Endothelial cell of umbilical vein (primary cell): ENCODE measurements at regions of chr1 and their contacts with region 1.

Region 1: GRCh38 chr1:201042779-201043461 is 19.4 kb upstream of the KIF21B start:
- DNase-seq: peak; percentile 73
- H3K4me3 ChIP-seq: no peak overlapping the region
- H3K27ac ChIP-seq: no peak overlapping the region
- H3K4me1 ChIP-seq: no peaks in the 10 kb centered on the region
- H3K27me3 ChIP-seq: peaks cover 0 to 2% of the 10 kb centered on the region in 2 experiments
- CTCF ChIP-seq: peak; percentile 86 to 91
- POLR2A ChIP-seq: no peak

Region 2: GRCh38 chr1:200654660-200655059 is 388.3 kb before region 1 on chr1:
- CTCF ChIA-PET with region 1: no interaction called
- POLR2A ChIA-PET with region 1: no interaction called
- dilution Hi-C with region 1: no loop called
- intact Hi-C with region 1: no loop called
- DNase-seq: no peak
- H3K4me3 ChIP-seq: no peak overlapping the region
- H3K27ac ChIP-seq: no peak overlapping the region
- H3K4me1 ChIP-seq: no peaks in the 10 kb centered on the region
- H3K27me3 ChIP-seq: no peaks in the 10 kb centered on the region
- CTCF ChIP-seq: no peak
- POLR2A ChIP-seq: no peak

Region 3: GRCh38 chr1:200890818-200891773 is 151.8 kb before region 1 on chr1:
- CTCF ChIA-PET with region 1: interaction called, 5 read pairs
- POLR2A ChIA-PET with region 1: no interaction called
- dilution Hi-C with region 1: no loop called
- intact Hi-C with region 1: loop called (anchors 5 kb)
- DNase-seq: peak; percentile 27
- H3K4me3 ChIP-seq: peak overlapping the region in 2 of 3 experiments; percentile 30 to 47
- H3K27ac ChIP-seq: no peak overlapping the region
- H3K4me1 ChIP-seq: no peaks in the 10 kb centered on the region
- H3K27me3 ChIP-seq: peaks cover 39 to 46% of the 10 kb centered on the region in 2 experiments
- CTCF ChIP-seq: peak; percentile 50
- POLR2A ChIP-seq: no peak

Region 4: DNA sequence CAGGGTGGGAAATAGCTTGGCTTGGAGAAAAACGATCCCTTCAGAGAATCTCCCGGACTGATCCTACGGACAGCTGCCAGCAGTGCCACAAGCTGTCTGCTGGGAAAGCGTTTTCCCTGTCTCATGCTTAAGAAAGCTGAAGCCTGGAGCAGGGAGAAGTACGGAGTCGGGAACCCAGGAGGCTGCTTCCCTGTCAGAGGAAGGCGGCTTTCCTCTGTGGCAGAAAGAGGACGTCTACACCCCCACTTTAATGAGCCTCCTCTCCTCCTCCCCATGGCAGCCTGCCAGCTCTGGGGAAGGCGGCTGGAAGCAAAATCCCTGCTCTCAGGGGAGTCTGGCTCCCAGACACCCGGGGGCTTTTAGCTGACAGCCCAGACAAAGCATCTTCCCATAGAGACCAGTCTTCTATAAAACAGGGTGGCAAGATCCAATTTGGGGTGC is 26.7 kb before region 1 on chr1:
- CTCF ChIA-PET with region 1: interaction called, 17 read pairs
- POLR2A ChIA-PET with region 1: no interaction called
- dilution Hi-C with region 1: no loop called
- intact Hi-C with region 1: no loop called
- DNase-seq: peak; percentile 34
- H3K4me3 ChIP-seq: no peak overlapping the region
- H3K27ac ChIP-seq: peak overlapping the region; percentile 4
- H3K4me1 ChIP-seq: peaks cover 36% of the 10 kb centered on the region
- H3K27me3 ChIP-seq: no peaks in the 10 kb centered on the region
- CTCF ChIP-seq: no peak
- POLR2A ChIP-seq: no peak

Region 5: GRCh38 chr1:201023517-201023902 is 19.4 kb before region 1 on chr1 and contains the start of gene KIF21B:
- CTCF ChIA-PET with region 1: interaction called, 23 read pairs
- POLR2A ChIA-PET with region 1: no interaction called
- dilution Hi-C with region 1: no loop called
- intact Hi-C with region 1: loop called (anchors 1 kb)
- DNase-seq: peak; percentile 75
- H3K4me3 ChIP-seq: peak within 1 kb of the TSS; percentile 11 to 49 (median 13)
- H3K27ac ChIP-seq: no peak within 1 kb of the TSS
- H3K4me1 ChIP-seq: peaks cover 37% of the 10 kb centered on the region
- H3K27me3 ChIP-seq: no peaks in the 10 kb centered on the region
- CTCF ChIP-seq: no peak
- POLR2A ChIP-seq: no peak
- total RNA-seq, gene KIF21B: 4.4 and 4.7 TPM in 2 replicates